Endothelial cell of umbilical vein (primary cell): ENCODE measurements at regions of chr15 and their contacts with region 1.

Region 1: GRCh38 chr15:46312133-46312740 is 677.4 kb downstream of the SQOR start:
- DNase-seq: peak; percentile 71
- H3K4me3 ChIP-seq: no peak overlapping the region
- H3K27ac ChIP-seq: no peak overlapping the region
- H3K4me1 ChIP-seq: no peaks in the 10 kb centered on the region
- H3K27me3 ChIP-seq: peaks cover 0 to 3% of the 10 kb centered on the region in 2 experiments
- CTCF ChIP-seq: peak; percentile 82 to 86
- POLR2A ChIP-seq: no peak

Region 2: DNA sequence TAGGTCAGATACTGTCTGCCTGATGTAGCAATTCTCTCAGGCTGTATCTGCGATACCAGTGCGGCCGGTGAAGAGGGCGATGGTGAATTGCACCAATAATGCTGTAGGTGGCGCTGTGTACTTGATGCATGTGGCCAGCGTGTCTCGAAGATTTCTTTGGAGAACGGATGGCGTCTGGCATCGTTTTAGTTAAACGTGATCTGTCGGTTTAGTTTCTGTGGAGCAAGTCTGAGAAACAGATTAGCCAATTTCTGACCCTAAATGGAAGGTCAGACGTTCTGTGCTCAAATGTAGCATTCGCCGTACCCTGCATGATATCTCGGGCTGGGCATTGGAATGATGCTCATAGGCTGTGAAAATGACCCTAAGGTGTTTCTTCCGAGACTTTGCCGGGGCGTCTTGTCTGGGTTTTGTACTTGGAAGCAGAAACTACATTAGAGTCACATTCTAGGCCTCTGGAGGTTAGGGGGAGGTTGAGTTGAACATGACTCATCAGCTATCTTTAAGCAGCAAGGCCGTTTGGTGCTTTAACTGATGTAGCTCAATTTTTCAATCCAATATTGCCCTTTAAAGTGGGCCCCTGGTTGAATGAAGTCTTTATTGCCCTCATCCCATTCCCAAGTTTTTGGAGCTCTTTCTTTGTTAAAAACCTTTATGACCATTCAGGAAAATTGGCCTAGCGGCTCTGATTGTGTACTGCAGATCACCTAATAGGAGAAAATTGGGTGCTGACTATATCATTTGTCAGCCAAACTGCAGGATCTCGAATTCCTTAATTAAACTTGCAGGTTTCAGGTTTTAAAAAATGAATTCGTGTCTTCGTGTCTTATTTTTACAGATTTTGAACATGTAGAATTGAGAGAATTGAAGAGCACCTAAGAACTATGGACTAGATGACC is 597.4 kb before region 1 on chr15:
- CTCF ChIA-PET with region 1: interaction called, 12 read pairs
- POLR2A ChIA-PET with region 1: no interaction called
- dilution Hi-C with region 1: no loop called
- intact Hi-C with region 1: loop called (anchors 1 kb)
- DNase-seq: peak; percentile 69
- H3K4me3 ChIP-seq: peak overlapping the region in 1 of 3 experiments; percentile 29
- H3K27ac ChIP-seq: no peak overlapping the region
- H3K4me1 ChIP-seq: peaks cover 7% of the 10 kb centered on the region
- H3K27me3 ChIP-seq: no peaks in the 10 kb centered on the region
- CTCF ChIP-seq: peak; percentile 85 to 92
- POLR2A ChIP-seq: no peak

Region 3: GRCh38 chr15:46091860-46092450 is 220.3 kb before region 1 on chr15:
- CTCF ChIA-PET with region 1: interaction called, 5 read pairs
- POLR2A ChIA-PET with region 1: interaction called, 4 read pairs
- dilution Hi-C with region 1: no loop called
- intact Hi-C with region 1: loop called (anchors 2 kb)
- DNase-seq: peak; percentile 30
- H3K4me3 ChIP-seq: no peak overlapping the region
- H3K27ac ChIP-seq: no peak overlapping the region
- H3K4me1 ChIP-seq: peaks cover 38% of the 10 kb centered on the region
- H3K27me3 ChIP-seq: no peaks in the 10 kb centered on the region
- CTCF ChIP-seq: peak; percentile 38 to 60
- POLR2A ChIP-seq: no peak

Region 4: DNA sequence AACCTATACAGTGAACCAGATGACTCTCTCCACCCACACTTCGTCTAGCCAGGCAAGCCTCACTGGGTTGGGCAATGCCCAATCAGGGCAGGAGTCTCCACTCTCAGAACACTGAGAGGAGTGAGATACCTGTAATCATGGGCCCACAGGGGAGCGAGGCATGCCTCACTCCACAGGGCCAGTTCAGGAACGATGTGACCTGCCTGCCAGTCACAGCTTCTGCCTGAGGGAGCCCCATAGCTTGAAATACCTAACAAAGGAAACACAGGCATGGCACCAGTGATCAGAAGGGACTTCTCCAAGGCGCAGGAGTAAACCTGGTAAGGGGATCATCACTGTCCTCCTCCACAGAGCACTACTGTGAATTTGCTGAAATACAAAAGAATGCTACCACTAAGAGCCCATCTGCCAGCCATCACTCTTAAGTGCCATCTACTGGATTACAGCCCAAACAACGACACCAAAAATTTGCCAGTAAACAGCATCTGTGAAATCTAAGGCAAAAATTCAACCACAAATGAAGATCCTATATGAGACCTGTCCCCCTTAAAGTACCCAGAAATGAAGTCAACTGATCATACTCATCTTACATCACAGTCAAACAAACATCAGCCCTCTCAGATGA is 715.2 kb after region 1 on chr15:
- CTCF ChIA-PET with region 1: no interaction called
- POLR2A ChIA-PET with region 1: no interaction called
- dilution Hi-C with region 1: no loop called
- intact Hi-C with region 1: loop called (anchors 5 kb)
- DNase-seq: no peak
- H3K4me3 ChIP-seq: no peak overlapping the region
- H3K27ac ChIP-seq: no peak overlapping the region
- H3K4me1 ChIP-seq: no peaks in the 10 kb centered on the region
- H3K27me3 ChIP-seq: no peaks in the 10 kb centered on the region
- CTCF ChIP-seq: no peak
- POLR2A ChIP-seq: no peak

Region 5: DNA sequence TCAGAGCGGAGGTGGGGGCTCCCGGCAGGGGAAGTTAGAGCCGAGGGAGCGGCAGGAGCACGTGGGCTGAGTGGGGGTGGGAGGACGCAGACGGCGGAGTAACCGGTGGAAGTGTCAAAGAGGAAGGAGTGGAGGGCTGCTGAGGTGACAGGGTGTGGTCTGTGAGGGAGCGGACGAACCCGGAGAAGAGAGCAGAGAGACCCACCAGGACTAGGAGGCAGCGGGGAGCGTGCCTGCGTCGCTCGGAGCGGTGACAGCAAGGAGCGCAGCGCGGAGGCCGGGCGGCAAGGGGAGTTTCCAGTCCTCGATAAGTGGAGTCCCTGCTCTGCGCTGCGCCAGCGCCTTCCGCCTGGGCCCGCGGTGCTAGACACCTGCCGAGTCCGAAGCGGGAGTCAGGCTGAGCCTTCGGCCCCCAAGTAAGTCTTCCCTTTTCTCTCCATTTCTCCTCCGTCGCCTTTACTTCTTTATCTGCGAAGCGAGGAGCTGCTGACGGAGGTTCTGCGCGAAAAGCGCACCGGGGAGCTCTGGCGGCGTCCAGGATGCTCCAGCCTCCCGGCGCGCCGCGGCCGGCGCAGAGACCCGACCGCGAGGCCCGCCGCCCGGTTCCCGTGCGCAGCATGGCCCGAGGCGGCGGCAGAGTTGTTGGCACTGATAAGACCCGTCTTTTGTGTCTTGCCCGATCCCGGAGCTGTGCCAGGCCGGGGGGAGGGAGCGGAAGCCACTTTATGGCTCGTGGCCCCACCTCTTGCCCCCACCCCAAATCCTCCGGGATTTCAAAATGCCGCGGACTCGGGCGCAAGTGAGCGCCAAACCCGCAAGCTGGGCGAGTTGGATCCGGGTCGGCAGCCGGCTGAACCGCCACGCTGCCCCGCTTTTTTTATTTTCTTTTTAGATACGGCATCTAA is 872.0 kb after region 1 on chr15:
- CTCF ChIA-PET with region 1: no interaction called
- POLR2A ChIA-PET with region 1: no interaction called
- dilution Hi-C with region 1: no loop called
- intact Hi-C with region 1: loop called (anchors 2 kb)
- DNase-seq: peak; percentile 62
- H3K4me3 ChIP-seq: peak overlapping the region; percentile 57 to 76 (median 72)
- H3K27ac ChIP-seq: peak overlapping the region; percentile 70
- H3K4me1 ChIP-seq: peaks cover 24% of the 10 kb centered on the region
- H3K27me3 ChIP-seq: no peaks in the 10 kb centered on the region
- CTCF ChIP-seq: no peak
- POLR2A ChIP-seq: no peak